HAP-1 (cell line): ENCODE measurements at regions of chr11 and their contacts with region 1.

Region 1: GRCh38 chr11:133834682-133835592 is 10.4 kb downstream of the SPATA19 start:
- DNase-seq: peak; percentile 44 to 65
- H3K4me3 ChIP-seq: no peak overlapping the region
- H3K4me1 ChIP-seq: no peaks in the 10 kb centered on the region
- H3K27me3 ChIP-seq: no peaks in the 10 kb centered on the region

Region 2: DNA sequence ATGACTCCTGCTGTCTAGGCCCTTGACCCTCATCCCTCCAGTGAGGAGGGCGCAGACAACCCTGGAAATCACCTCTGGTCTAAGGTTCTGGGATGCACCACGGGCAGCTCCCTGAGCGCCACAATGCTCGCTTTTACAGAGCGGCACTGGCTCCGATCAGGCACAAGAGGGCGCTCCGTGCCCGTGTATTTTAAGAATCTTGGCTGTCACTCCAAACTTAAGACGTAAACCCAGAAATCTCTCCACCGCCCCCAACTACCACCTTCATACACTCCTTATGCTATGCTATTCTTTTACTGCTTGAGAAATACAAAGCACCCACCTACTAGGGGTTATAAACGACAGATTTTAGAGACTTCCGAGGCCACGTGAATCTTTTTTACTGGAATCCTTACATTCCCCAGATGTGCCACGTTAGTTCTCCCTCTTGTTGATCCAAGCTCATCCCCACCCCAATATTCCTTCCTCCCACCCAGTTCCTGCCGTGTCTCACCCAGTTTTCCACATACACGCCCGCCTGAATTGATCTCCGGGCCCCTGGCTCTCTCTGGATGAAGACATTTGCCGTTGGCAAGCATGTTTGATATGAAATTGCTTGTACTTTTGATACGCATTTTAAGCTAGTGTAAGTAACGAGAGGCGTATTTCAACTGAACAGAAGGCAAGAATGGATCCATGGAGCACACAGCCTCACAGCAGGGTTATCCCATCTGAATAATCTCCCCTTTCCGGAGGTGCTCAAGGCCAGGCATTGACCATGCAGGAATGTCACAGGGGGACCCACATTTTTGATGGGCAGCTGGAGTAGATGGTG is 756.1 kb before region 1 on chr11:
- in situ Hi-C with region 1: loop called (anchors 5 kb)
- DNase-seq: peak; percentile 28 to 63
- H3K4me3 ChIP-seq: no peak overlapping the region
- H3K4me1 ChIP-seq: no peaks in the 10 kb centered on the region
- H3K27me3 ChIP-seq: no peaks in the 10 kb centered on the region

Region 3: DNA sequence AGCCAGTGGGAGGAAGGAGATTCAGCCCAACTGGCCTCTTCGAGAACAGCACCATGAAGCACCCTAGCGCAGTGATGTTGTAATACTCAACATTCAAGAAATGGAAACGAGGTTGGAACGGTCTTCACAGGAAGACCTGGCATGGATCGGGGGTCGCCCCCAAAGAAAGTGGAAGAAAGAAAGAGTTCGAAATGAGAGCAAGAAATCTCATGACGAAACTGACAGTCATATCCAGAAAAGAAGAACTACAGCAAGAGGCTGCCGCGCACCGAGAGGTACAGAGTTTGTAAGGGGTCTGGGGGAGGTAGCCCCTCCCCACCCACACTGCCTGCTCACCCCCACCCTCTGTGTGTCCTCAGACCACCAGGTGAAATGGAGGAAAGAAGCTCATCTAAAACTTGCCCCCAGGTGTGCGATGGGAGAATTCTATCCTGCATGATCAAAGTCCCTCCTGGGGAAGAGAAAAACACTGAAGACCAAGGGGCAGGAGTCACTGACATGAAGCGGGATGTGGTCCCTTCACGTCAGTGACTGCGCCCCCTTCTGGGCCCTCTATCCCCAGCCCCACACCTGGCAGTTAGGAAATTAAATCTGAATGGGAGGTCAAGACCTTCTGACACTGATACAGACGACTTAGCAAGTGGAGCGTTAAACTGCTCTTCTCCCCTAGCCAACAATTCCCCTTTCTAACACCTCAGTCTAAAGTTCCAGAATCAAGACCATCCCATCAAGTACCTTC is 63.3 kb after region 1 on chr11:
- in situ Hi-C with region 1: no loop called
- DNase-seq: no peak
- H3K4me3 ChIP-seq: no peak overlapping the region
- H3K4me1 ChIP-seq: no peaks in the 10 kb centered on the region
- H3K27me3 ChIP-seq: no peaks in the 10 kb centered on the region